Caco-2 (cell line): ENCODE measurements at regions of chr10 and their contacts with region 1.

Region 1: GRCh38 chr10:52215745-52216361 is 98.2 kb upstream of the DKK1 start:
- DNase-seq: peak; percentile 62 to 76
- H3K4me3 ChIP-seq: no peak overlapping the region
- H3K4me3 Mint-ChIP-seq: no peak overlapping the region
- H3K27ac Mint-ChIP-seq: no peak overlapping the region
- H3K4me1 ChIP-seq: peaks cover 14% of the 10 kb centered on the region
- H3K4me1 Mint-ChIP-seq: peaks cover 7% of the 10 kb centered on the region
- H3K27me3 ChIP-seq: no peaks in the 10 kb centered on the region
- H3K27me3 Mint-ChIP-seq: no peaks in the 10 kb centered on the region
- CTCF ChIP-seq: peak; percentile 84 to 92

Region 2: GRCh38 chr10:51010977-51011376 is 1204.9 kb before region 1 on chr10:
- CTCF ChIA-PET with region 1: no interaction called
- POLR2A ChIA-PET with region 1: no interaction called
- intact Hi-C with region 1: loop called (anchors 5 kb)
- DNase-seq: peak in 1 of 2 experiments; percentile 63
- H3K4me3 ChIP-seq: no peak overlapping the region
- H3K4me3 Mint-ChIP-seq: no peak overlapping the region
- H3K27ac Mint-ChIP-seq: no peak overlapping the region
- H3K4me1 ChIP-seq: no peaks in the 10 kb centered on the region
- H3K4me1 Mint-ChIP-seq: no peaks in the 10 kb centered on the region
- H3K27me3 ChIP-seq: no peaks in the 10 kb centered on the region
- H3K27me3 Mint-ChIP-seq: peaks cover 11% of the 10 kb centered on the region
- CTCF ChIP-seq: peak; percentile 82 to 96

Region 3: DNA sequence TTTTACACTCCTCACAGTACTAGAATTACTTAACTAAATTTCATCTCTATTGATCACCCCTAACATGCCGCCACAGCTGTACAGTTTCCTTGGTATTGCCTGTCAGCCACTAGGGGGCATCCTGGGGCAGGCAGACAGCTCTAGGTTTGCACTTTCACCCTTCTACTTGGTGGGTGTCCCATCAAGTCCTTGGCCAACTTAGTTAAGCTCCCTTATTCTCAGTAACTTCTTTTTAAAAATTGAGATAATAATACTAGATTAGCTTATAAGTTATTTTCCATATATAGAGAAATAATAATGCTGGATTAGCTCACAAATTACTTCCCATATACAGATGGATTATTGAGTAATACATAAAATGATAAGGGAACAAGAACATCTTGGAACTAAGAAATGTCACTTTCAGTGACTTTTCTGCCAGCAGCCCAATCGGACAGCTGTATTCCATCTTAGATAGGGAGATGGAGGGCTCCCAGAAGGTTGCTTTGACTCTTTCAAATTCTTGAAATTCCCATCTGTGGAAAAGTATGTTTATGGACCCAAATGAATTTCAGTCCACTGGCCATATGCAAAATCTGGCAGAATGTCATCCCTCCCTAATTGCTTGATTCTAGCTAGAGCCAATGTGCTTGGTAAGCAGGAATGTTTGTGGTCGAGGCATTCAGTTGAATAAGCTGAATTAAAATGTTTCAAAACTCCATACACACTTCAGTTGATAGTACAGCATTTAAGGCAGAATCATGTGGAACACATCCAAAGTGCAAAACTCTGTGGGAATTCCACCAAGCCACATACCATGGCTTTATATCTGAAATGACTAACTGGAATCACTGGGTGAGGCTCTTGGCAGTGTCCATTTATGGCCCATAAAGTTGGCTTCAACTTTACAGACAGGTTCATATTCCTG is 826.2 kb before region 1 on chr10:
- CTCF ChIA-PET with region 1: interaction called, 5 read pairs
- POLR2A ChIA-PET with region 1: no interaction called
- intact Hi-C with region 1: loop called (anchors 1 kb)
- DNase-seq: peak; percentile 69 to 79
- H3K4me3 ChIP-seq: no peak overlapping the region
- H3K4me3 Mint-ChIP-seq: no peak overlapping the region
- H3K27ac Mint-ChIP-seq: no peak overlapping the region
- H3K4me1 ChIP-seq: no peaks in the 10 kb centered on the region
- H3K4me1 Mint-ChIP-seq: no peaks in the 10 kb centered on the region
- H3K27me3 ChIP-seq: no peaks in the 10 kb centered on the region
- H3K27me3 Mint-ChIP-seq: peaks cover 2% of the 10 kb centered on the region
- CTCF ChIP-seq: peak; percentile 93 to 97

Region 4: GRCh38 chr10:51879238-51879637 is 336.6 kb before region 1 on chr10:
- CTCF ChIA-PET with region 1: no interaction called
- POLR2A ChIA-PET with region 1: no interaction called
- intact Hi-C with region 1: loop called (anchors 5 kb)
- DNase-seq: no peak
- H3K4me3 ChIP-seq: no peak overlapping the region
- H3K4me3 Mint-ChIP-seq: no peak overlapping the region
- H3K27ac Mint-ChIP-seq: no peak overlapping the region
- H3K4me1 ChIP-seq: no peaks in the 10 kb centered on the region
- H3K4me1 Mint-ChIP-seq: no peaks in the 10 kb centered on the region
- H3K27me3 ChIP-seq: no peaks in the 10 kb centered on the region
- H3K27me3 Mint-ChIP-seq: no peaks in the 10 kb centered on the region
- CTCF ChIP-seq: no peak

Region 5: DNA sequence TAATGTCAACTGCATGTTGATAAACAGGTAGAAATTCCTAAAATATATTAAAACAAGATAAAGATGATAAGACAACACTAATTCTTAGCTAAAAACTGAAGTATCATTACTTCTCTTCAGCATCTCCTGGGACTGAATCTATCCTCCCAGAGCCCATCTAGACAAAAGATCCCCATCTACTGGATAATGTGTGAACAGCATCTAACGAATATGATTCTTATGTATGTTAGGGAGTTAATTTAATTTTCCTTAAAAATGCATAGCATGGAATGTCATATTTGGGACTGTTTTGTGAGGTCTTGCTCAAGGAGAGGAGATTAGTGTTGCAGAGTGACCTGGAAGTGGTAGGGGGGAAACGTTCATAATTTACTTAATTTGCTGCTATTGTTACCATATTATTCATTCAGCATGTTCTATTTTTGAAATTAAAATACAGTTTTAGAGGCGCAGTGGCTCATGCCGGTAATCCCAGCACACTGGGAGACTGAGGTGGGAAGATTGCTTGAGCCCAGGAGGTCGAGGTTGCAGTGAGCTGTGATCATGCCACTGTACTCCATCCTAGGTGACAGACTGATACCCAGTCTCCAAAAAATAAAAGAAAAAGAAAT is 211.4 kb before region 1 on chr10:
- CTCF ChIA-PET with region 1: no interaction called
- POLR2A ChIA-PET with region 1: no interaction called
- intact Hi-C with region 1: loop called (anchors 1 kb)
- DNase-seq: peak in 1 of 2 experiments; percentile 62
- H3K4me3 ChIP-seq: no peak overlapping the region
- H3K4me3 Mint-ChIP-seq: no peak overlapping the region
- H3K27ac Mint-ChIP-seq: no peak overlapping the region
- H3K4me1 ChIP-seq: no peaks in the 10 kb centered on the region
- H3K4me1 Mint-ChIP-seq: peaks cover 6% of the 10 kb centered on the region
- H3K27me3 ChIP-seq: no peaks in the 10 kb centered on the region
- H3K27me3 Mint-ChIP-seq: no peaks in the 10 kb centered on the region
- CTCF ChIP-seq: peak; percentile 80 to 81

Region 6: GRCh38 chr10:52056296-52056695 is 159.6 kb before region 1 on chr10:
- CTCF ChIA-PET with region 1: no interaction called
- POLR2A ChIA-PET with region 1: no interaction called
- intact Hi-C with region 1: no loop called
- DNase-seq: no peak
- H3K4me3 ChIP-seq: no peak overlapping the region
- H3K4me3 Mint-ChIP-seq: no peak overlapping the region
- H3K27ac Mint-ChIP-seq: no peak overlapping the region
- H3K4me1 ChIP-seq: no peaks in the 10 kb centered on the region
- H3K4me1 Mint-ChIP-seq: no peaks in the 10 kb centered on the region
- H3K27me3 ChIP-seq: no peaks in the 10 kb centered on the region
- H3K27me3 Mint-ChIP-seq: no peaks in the 10 kb centered on the region
- CTCF ChIP-seq: no peak

Region 7: GRCh38 chr10:52066383-52066782 is 149.5 kb before region 1 on chr10:
- CTCF ChIA-PET with region 1: interaction called, 3 read pairs
- POLR2A ChIA-PET with region 1: no interaction called
- intact Hi-C with region 1: loop called (anchors 1 kb)
- DNase-seq: peak in 1 of 2 experiments; percentile 47
- H3K4me3 ChIP-seq: no peak overlapping the region
- H3K4me3 Mint-ChIP-seq: no peak overlapping the region
- H3K27ac Mint-ChIP-seq: no peak overlapping the region
- H3K4me1 ChIP-seq: no peaks in the 10 kb centered on the region
- H3K4me1 Mint-ChIP-seq: no peaks in the 10 kb centered on the region
- H3K27me3 ChIP-seq: no peaks in the 10 kb centered on the region
- H3K27me3 Mint-ChIP-seq: no peaks in the 10 kb centered on the region
- CTCF ChIP-seq: peak; percentile 38 to 52

Region 8: DNA sequence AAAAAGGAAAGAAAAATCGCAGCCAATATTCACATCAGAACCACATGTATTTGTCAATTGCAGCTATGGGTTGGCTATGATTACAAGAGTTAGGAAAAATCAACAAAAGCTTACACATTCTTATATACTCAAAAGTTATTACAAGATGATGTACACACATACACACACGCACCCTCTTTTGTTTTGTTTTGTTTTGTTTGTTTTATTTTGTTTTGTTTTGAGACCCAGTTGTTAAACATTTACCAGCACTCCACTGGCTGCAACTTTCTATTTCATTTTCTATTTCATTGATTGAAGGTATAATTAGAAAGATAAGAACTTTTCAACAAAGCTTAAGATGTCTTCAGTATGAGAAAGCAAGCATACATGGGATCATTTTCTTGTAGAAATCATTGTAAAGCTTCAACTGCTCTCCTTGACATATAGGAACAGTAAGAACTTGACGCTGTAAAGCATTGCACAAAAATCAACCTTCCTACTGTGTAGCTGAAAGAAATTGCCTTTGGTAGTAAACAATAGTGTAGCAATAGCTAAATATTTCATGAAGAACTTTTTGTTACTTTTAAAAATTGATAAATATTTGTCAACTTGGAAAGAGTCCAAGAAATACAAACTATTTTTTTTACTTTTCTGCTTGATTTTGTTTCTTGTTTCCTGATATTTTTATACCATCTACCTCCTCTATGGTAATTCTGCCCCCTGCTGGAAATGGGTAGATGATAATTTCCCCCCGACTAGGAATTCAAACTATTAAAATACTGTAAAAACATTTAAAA is 350.8 kb after region 1 on chr10:
- CTCF ChIA-PET with region 1: no interaction called
- POLR2A ChIA-PET with region 1: no interaction called
- intact Hi-C with region 1: loop called (anchors 2 kb)
- DNase-seq: peak in 1 of 2 experiments; percentile 65
- H3K4me3 ChIP-seq: no peak overlapping the region
- H3K4me3 Mint-ChIP-seq: no peak overlapping the region
- H3K27ac Mint-ChIP-seq: no peak overlapping the region
- H3K4me1 ChIP-seq: peaks cover 5% of the 10 kb centered on the region
- H3K4me1 Mint-ChIP-seq: no peaks in the 10 kb centered on the region
- H3K27me3 ChIP-seq: no peaks in the 10 kb centered on the region; the same call in 1 of the 2 replicates
- H3K27me3 Mint-ChIP-seq: no peaks in the 10 kb centered on the region
- CTCF ChIP-seq: peak; percentile 78 to 83